Heart right ventricle (tissue), 16 donors: ENCODE measurements at regions of chr22 and their contacts with region 1.

Region 1: GRCh38 chr22:27919222-27919941 is at the start of gene PITPNB:
- DNase-seq: peak; percentile 97 to 100
- ATAC-seq: peak; percentile 95 to 99 (median 97)
- H3K4me3 ChIP-seq: peak within 1 kb of the TSS; percentile 56 to 97 (median 92)
- H3K27ac ChIP-seq: peak within 1 kb of the TSS; percentile 95 to 99 (median 98)
- H3K4me1 ChIP-seq: peaks cover 0 to 62% (median 51%) of the 10 kb centered on the region in 9 donors
- H3K27me3 ChIP-seq: no peaks in the 10 kb centered on the region
- CTCF ChIP-seq: no peak
- total RNA-seq, gene PITPNB: 33.7 to 78.3 (median 62.7) TPM

Region 2: GRCh38 chr22:27880778-27881394 is 38.5 kb before region 1 on chr22:
- intact Hi-C with region 1: loop called in 5 of 10 experiments (anchors 2 to 5 kb)
- DNase-seq: peak in 1 of 2 donors; percentile 68
- ATAC-seq: peak; percentile 58 to 89 (median 80)
- H3K4me3 ChIP-seq: no peak overlapping the region
- H3K27ac ChIP-seq: peak overlapping the region in 7 of 10 donors; percentile 10 to 46 (median 33)
- H3K4me1 ChIP-seq: peaks cover 3 to 77% (median 67%) of the 10 kb centered on the region in 9 donors
- H3K27me3 ChIP-seq: no peaks in the 10 kb centered on the region
- CTCF ChIP-seq: peak; percentile 76 to 87 (median 83)

Region 3: DNA sequence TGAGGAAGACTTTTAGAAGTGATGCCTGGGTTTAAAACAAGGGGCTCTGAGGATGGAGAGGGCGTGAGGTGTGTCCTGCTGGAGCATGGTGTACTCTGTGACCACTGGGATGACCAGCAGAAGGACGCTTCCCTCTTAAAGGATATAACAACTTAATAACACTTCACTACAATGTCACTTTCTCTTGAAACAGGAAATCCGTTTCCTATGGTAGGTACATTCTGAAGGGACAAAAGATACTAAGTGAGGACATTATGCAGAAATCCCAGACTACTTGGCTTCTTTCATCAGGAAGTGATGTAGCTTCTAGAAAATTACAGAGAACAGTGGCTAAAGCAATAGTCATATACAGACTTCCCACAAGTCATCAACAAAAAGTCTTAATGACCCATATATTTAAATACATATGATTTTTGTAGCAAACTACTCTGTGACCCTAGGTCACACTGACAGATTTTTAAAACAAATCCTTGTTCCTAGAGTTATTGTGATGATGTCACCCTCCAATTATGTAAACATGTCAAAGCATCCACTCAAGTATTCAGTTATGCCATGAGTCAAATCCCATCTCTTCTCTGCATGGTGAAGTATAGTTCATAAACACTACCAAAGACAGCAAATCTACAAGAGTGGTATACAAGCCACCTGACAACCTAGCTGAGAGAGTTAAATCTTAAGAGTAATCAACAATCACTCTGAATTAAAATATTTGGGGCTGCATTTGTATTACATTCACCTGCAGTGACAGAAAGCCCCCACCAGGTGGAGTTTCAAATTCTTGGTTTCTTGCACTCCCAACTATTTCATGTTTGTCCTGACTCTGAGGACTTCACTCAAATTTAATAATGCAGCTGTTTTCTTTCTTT is 33.2 kb before region 1 on chr22:
- intact Hi-C with region 1: loop called in 5 of 10 experiments (anchors 2 to 5 kb)
- DNase-seq: peak in 1 of 2 donors; percentile 42
- ATAC-seq: peak in 6 of 8 donors; percentile 38 to 66 (median 56)
- H3K4me3 ChIP-seq: no peak overlapping the region
- H3K27ac ChIP-seq: peak overlapping the region in 7 of 10 donors; percentile 5 to 56 (median 45)
- H3K4me1 ChIP-seq: peaks cover 3 to 68% (median 37%) of the 10 kb centered on the region in 9 donors
- H3K27me3 ChIP-seq: no peaks in the 10 kb centered on the region
- CTCF ChIP-seq: peak; percentile 80 to 92 (median 86)

Region 4: DNA sequence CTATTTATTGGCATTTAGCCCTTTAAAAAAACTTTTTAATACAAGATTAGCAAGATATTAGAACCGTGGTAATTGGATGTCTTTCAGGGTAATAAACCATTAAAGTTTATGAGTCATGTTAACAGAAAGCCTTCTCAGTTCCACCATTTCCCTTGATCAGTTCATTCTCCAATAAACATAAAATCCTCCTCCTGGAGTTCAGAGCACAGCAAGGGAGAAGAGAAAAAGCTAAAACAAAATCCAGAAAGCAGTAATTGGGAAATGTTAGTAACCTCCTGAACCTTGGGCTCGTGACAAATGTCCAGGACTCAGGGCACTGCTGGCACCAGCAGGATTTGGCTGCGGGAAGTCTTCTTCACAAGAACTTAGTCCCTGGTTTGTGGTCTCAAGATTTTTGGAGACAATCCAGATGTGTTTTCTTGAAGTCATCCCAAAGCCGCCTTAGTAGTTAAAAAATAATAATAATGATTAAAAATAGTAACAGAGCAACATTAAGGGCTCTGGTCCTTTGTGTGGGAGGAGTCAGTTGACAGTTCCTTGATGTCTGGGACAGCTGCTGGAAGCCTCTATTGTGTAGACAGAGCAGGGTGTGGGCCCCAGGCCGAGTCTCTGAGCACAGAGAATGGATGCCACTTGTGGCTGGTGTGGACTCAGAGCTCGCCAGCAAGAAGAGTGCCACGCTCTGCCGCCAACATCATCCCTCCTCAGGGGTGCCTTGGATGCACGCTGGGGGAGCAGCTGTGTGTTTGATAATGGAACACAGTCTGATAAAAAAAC is 43.1 kb after region 1 on chr22:
- intact Hi-C with region 1: loop called in 1 of 10 experiments (anchors 5 kb)
- DNase-seq: no peak
- ATAC-seq: peak in 7 of 8 donors; percentile 49 to 68 (median 52)
- H3K4me3 ChIP-seq: no peak overlapping the region
- H3K27ac ChIP-seq: peak overlapping the region in 4 of 10 donors; percentile 2 to 57 (median 34)
- H3K4me1 ChIP-seq: peaks cover 0 to 38% (median 15%) of the 10 kb centered on the region in 9 donors
- H3K27me3 ChIP-seq: no peaks in the 10 kb centered on the region
- CTCF ChIP-seq: no peak

Region 5: DNA sequence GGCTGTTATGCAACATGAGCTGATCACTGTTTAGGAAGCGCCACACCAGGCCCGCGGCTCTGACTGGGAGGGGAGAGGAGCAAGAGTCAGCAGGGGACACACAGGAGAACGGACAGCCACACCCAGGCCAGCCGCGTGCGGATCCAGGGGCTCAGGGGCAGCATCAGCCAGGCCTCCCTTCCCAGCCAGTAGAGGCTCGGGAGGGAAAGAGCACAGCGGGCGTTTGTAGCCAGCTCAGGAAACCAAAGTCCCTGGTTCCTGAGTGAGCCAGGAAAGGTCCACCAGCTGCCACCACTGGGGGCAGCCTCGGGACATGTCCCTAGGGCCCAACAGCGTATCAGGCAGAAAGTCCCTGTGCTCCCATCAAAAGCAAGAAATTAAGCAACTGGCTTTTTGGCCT is 71.5 kb after region 1 on chr22:
- intact Hi-C with region 1: loop called in 4 of 10 experiments (anchors 5 to 10 kb)
- DNase-seq: peak; percentile 58 to 79
- ATAC-seq: peak; percentile 63 to 89 (median 83)
- H3K4me3 ChIP-seq: peak overlapping the region in 5 of 10 donors; percentile 0 to 27 (median 11)
- H3K27ac ChIP-seq: peak overlapping the region in 9 of 10 donors; percentile 19 to 73 (median 50)
- H3K4me1 ChIP-seq: peaks cover 0 to 30% (median 17%) of the 10 kb centered on the region in 9 donors
- H3K27me3 ChIP-seq: no peaks in the 10 kb centered on the region
- CTCF ChIP-seq: peak; percentile 46 to 70 (median 61)